Heart right ventricle (tissue), 16 donors: ENCODE measurements at regions of chr7 and their contacts with region 1.

Region 1: DNA sequence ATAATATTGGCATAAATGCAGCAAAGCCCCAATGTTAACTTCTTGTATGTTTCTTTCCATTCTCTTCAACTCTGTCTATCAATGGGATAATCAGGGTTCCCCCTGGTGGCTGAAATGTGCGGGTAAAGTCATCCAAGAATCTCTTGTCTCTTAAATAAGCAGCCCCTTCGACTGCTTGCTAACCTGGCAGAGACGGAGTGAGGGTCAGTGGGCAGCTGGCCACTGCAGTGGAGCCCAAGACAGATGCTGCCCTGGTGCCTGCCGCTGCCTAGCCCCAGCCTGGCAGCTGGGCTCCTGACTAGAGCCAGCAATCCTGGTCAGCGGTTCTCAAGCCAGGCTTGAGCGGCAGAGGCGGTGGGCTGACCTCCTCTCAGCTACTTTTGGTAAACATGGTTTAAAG is 248.9 kb downstream of the COBL start:
- DNase-seq: peak in 1 of 2 donors; percentile 76
- ATAC-seq: peak; percentile 36 to 59 (median 48)
- H3K4me3 ChIP-seq: no peak overlapping the region
- H3K27ac ChIP-seq: peak overlapping the region in 4 of 10 donors; percentile 4 to 38 (median 31)
- H3K4me1 ChIP-seq: peaks cover 9 to 39% (median 27%) of the 10 kb centered on the region in 9 donors
- H3K27me3 ChIP-seq: no peaks in the 10 kb centered on the region
- CTCF ChIP-seq: peak; percentile 58 to 85 (median 76)

Region 2: DNA sequence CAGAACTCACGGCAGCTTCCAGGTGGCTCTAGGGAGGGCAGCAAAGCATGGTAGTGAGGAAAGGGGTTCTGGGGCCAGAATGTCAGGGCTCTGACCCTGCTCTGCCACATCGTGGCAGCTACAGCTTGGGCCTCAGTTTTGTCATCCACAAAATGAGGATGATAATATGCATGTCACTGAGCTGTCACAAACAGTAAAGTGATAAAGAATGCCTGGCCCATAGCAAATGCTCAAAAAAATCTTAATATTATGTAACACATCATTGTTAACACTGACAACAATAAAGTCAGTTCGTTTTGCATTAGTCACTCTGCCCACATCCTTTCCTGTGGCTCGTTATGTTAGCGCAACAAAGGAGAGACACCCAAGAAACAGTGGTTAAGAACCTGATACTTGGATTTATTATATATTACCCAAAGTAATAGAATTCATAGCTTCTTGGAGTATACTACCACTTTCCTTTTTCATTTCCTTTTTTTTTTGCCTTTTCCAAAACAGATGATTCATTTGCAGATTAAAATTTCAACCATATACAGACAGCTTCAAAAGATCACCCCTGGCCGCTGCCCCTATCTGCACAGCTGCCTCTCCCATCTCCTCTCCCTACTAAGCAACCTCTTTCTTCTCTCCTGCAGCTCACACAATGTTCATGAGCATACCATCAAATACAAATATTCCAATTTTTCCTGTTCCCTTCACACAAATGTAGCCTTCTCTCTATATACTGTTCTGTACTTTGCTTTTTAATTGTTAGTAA is 457.1 kb before region 1 on chr7:
- intact Hi-C with region 1: loop called in 1 of 10 experiments (anchors 10 kb)
- DNase-seq: no peak
- ATAC-seq: no peak
- H3K4me3 ChIP-seq: no peak overlapping the region
- H3K27ac ChIP-seq: no peak overlapping the region
- H3K4me1 ChIP-seq: peaks cover 0 to 19% (median 0%) of the 10 kb centered on the region in 9 donors
- H3K27me3 ChIP-seq: no peaks in the 10 kb centered on the region
- CTCF ChIP-seq: no peak

Region 3: GRCh38 chr7:50679218-50680007 is 388.3 kb before region 1 on chr7:
- intact Hi-C with region 1: loop called in 2 of 10 experiments (anchors 10 kb)
- DNase-seq: no peak
- ATAC-seq: peak; percentile 64 to 78 (median 70)
- H3K4me3 ChIP-seq: no peak overlapping the region
- H3K27ac ChIP-seq: peak overlapping the region in 2 of 10 donors; percentile 10 to 23
- H3K4me1 ChIP-seq: peaks cover 10 to 86% (median 43%) of the 10 kb centered on the region in 9 donors
- H3K27me3 ChIP-seq: no peaks in the 10 kb centered on the region
- CTCF ChIP-seq: peak in 8 of 9 donors; percentile 22 to 64 (median 51)

Region 4: DNA sequence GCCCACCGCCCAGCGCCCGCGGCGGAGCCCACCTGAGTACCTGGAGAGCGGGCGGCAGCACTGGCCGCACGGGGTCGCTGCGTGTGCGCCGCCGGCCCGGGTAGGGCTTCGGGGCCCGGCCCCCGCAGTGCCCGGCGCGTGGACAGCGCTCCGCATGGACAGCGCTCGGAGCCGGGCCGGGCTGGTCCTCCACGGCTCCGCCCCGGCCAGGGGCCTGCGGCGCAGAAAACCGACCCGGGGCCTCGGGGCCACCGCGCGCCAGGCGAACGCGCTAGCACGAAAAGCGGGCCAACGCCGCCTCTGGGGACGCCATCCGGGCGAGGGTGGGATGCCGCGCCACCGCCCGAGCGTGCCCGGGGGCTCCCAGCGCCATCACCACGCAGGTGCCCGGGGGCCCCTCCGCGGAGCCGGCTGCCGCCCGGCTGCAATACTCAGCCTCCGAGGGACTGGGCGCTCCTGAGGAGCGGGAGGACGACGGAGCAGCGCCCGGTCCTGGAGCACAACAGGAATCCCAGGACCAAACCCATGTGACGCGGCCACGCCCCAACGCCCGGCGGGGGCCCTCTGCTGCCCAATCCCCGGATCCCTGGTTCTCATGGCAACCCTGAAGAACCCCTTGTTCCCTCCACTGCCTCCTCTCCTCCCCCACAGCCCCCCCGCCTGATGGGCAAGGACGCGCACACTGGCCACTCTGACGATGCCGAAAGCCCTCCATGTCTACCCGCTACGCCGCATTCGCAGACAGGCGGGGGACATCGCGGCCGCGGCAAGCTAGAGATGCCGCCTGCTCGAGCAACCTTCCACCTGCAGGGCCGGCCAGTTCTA is 285.2 kb before region 1 on chr7 and contains the start of gene GRB10:
- intact Hi-C with region 1: loop called in 5 of 10 experiments (anchors 5 to 10 kb)
- DNase-seq: peak; percentile 37 to 48
- ATAC-seq: peak; percentile 41 to 88 (median 76)
- H3K4me3 ChIP-seq: peak within 1 kb of the TSS; percentile 7 to 65 (median 59)
- H3K27ac ChIP-seq: peak within 1 kb of the TSS in 5 of 10 donors; percentile 12 to 34 (median 26)
- H3K4me1 ChIP-seq: peaks cover 4 to 73% (median 45%) of the 10 kb centered on the region in 9 donors
- H3K27me3 ChIP-seq: peaks cover 0 to 6% (median 0%) of the 10 kb centered on the region in 7 donors
- CTCF ChIP-seq: peak in 7 of 9 donors; percentile 15 to 50 (median 28)
- total RNA-seq, gene GRB10: 25.5 to 48.7 (median 31.5) TPM

Region 5: DNA sequence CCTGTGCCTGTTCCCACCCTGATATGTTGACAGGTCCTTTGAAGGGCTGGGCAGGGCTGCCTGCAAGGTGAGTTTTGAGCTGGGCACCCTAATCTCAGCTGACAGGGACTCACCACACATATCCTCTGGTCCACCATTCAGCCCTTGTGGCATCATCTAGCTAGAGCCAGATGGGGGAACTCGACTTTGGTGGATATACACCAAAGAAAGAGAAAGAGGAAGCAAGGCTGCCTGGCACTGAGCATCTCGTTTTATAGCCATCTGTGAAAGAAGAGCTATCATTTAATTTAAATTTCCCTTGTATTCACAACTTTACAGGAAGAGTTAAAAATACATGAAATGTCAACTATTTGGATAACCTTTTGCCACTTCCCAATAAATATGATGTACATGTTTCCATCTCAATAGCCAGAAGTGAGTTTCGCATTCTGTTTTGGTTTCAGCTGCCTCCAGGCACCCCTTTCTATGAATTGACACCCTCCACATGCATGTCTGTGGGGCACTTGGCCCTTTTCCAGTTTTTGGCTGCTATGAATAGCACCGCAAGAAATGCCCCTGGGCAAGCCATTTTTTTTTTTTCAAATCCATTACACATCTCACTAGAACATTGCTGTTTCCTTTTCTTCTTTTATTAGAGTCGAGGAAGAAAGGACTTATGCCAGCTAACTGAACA is 262.2 kb before region 1 on chr7:
- intact Hi-C with region 1: loop called in 1 of 10 experiments (anchors 10 kb)
- DNase-seq: no peak
- ATAC-seq: no peak
- H3K4me3 ChIP-seq: no peak overlapping the region
- H3K27ac ChIP-seq: no peak overlapping the region
- H3K4me1 ChIP-seq: peaks cover 0 to 10% (median 0%) of the 10 kb centered on the region in 9 donors
- H3K27me3 ChIP-seq: no peaks in the 10 kb centered on the region
- CTCF ChIP-seq: no peak

Region 6: GRCh38 chr7:50978633-50979215 is 89.0 kb before region 1 on chr7:
- intact Hi-C with region 1: no loop called
- DNase-seq: no peak
- ATAC-seq: no peak
- H3K4me3 ChIP-seq: no peak overlapping the region
- H3K27ac ChIP-seq: no peak overlapping the region
- H3K4me1 ChIP-seq: peaks cover 0 to 6% (median 0%) of the 10 kb centered on the region in 9 donors
- H3K27me3 ChIP-seq: no peaks in the 10 kb centered on the region
- CTCF ChIP-seq: no peak

Region 7: DNA sequence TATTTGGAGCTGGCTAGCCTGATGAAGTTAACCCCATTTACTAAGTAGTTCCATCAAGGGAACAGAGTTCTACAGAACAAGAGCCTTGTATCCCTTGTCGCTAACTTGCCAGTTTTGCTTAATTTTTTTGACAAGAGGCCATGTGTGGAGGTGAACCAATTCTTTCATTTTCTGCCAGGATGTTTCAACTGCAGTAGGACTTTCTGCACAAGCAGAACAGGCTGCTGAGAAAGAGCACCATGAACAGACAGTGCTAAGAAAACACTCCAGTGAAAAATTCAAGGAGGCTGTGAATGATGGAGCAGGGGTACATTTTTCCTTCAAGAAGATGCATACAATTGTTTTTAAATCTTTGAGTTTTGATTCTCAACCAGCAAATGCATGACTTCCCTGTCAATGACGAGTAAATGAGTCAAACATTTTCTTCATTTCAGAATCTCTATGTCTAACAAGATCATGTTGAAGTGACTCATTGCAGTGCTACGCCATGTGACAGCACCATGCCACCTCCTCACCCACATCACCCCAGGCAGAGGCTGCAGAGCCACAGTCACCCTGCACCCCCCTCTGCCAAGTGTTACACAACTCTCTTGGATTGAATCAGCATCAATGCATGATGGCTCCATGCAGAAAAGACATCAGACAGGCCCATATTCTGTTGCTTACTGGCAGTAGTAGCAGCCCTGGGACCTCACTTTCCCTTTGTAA is 55.7 kb after region 1 on chr7:
- intact Hi-C with region 1: loop called in 2 of 10 experiments (anchors 5 kb)
- DNase-seq: peak in 1 of 2 donors; percentile 27
- ATAC-seq: peak in 4 of 8 donors; percentile 57 to 77 (median 64)
- H3K4me3 ChIP-seq: no peak overlapping the region
- H3K27ac ChIP-seq: peak overlapping the region in 7 of 10 donors; percentile 5 to 84 (median 69)
- H3K4me1 ChIP-seq: peaks cover 6 to 51% (median 33%) of the 10 kb centered on the region in 9 donors
- H3K27me3 ChIP-seq: no peaks in the 10 kb centered on the region
- CTCF ChIP-seq: no peak

Region 8: DNA sequence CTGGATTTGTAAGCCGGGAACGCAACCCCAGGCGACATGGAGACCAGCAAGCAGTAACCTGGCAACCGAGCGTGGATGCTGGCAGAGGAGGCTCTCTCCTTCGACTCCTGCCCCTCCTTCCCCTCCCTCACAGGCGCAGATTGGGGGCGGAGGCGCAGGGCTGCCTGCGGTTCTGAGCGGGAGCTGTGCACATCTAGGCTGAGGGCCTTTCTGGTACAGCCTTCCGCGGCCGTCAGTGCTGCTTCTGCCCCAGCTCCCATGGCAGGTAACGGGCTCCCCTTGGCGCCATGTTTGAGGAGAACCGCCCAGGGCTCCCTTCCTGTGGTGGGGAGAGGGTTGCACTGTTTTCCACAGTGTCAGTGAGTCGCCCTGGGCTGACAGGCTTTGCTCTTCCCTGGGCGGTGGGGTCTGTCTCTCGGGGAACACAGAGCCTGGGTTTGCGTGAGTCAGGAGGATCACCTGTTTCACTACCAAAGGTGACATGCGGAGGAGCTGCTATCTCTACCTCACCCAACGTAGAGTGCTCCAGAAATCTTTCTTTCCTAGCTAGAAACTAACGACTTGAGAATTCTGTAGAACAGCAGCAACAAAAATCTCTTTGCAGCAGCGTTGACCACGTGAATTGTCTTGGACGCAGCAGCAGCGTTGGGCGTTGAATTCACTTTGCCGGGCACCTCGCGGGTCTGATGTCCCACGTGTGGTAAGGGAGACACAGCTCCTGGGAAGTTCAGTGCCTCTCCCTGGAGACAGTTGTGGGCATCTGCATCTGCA is 403.6 kb after region 1 on chr7:
- intact Hi-C with region 1: no loop called
- DNase-seq: no peak
- ATAC-seq: peak in 1 of 8 donors; percentile 37
- H3K4me3 ChIP-seq: no peak overlapping the region
- H3K27ac ChIP-seq: no peak overlapping the region
- H3K4me1 ChIP-seq: no peaks in the 10 kb centered on the region
- H3K27me3 ChIP-seq: peaks cover 0 to 38% (median 18%) of the 10 kb centered on the region in 7 donors
- CTCF ChIP-seq: no peak

Region 9: GRCh38 chr7:51789489-51789888 is 721.7 kb after region 1 on chr7:
- intact Hi-C with region 1: no loop called
- DNase-seq: no peak
- ATAC-seq: no peak
- H3K4me3 ChIP-seq: no peak overlapping the region
- H3K27ac ChIP-seq: no peak overlapping the region
- H3K4me1 ChIP-seq: no peaks in the 10 kb centered on the region
- H3K27me3 ChIP-seq: no peaks in the 10 kb centered on the region
- CTCF ChIP-seq: peak in 1 of 9 donors; percentile 5